Ascending aorta (tissue), 2 donors: ENCODE measurements at regions of chr4 and their contacts with region 1.

Region 1: DNA sequence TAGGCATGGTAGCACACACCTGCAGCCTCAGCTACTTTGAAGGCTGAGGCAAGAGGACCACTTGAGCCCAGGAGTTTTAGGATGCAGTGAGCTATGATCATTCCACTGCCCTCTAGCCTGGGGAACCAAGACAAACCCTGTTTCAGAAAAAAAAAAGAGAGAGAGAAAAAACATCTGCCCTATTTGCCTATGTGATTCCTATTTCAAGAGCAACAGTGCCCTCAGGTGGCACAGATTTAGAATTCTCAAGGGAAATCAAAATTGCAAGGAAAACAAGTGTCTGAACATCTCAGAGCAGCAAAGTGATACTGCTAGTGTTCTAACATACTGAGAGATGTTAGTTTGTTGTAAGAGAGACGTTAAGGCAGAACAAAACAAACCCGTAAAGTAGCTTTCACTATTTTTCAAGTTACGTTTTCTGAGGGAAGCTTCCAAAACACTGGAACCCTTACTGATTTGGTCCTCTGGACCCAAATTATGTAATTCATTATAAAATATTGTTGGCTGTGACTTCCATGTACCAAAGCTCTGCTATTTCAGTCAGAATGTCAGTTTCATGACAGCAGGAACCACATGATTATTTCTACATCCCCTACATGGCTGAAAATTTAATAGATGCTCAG is 7.9 kb downstream of the BDH2 start:
- DNase-seq: no peak
- H3K4me3 ChIP-seq: no peak overlapping the region
- H3K27ac ChIP-seq: no peak overlapping the region
- H3K4me1 ChIP-seq: peaks cover 0 to 2% of the 10 kb centered on the region in 2 donors
- H3K27me3 ChIP-seq: no peaks in the 10 kb centered on the region
- CTCF ChIP-seq: peak in 2 of 3 experiments; percentile 39 to 53

Region 2: DNA sequence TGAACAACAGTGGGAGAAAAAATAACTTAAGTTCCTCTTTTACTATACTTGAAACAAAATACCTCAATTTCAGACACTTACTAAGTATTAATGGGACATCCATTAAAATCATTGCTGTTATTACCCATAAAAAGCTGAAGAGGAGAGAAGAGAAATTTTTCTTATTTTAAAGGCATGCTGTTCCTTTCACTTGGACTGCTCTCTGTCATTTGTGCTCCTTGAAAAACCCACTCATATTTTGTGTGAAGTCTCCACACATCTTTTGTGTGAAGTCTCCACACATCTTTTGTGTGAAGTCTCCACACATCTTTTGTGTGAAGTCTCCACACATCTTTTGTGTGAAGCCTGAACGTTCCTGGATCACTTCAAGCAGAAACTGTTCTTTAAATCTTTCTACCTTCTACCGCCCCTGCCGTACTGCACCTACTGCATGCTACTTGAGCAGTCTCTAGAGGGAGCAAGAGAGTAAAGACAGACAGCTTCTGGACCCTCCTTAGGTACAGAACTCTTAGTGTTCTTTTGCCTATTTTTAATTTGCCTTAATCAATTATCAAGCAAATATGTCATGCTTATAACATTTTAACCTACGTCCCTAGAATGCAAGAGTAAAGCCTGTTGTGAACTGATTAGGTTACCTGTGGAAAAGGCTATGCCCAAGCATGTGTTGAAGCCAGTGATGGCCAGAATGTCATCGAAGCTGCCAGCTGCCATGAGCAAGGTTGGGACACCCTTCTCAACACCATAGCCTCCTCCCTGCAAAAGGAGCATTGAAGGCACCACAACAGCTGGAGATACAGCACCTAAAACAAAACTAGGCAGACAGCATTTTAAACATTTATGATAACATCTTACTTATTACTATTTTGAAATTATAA is 45.1 kb before region 1 on chr4:
- intact Hi-C with region 1: loop called (anchors 2 kb)
- DNase-seq: no peak
- H3K4me3 ChIP-seq: no peak overlapping the region
- H3K27ac ChIP-seq: no peak overlapping the region
- H3K4me1 ChIP-seq: no peaks in the 10 kb centered on the region
- H3K27me3 ChIP-seq: no peaks in the 10 kb centered on the region
- CTCF ChIP-seq: peak; percentile 26 to 64 (median 61)

Region 3: DNA sequence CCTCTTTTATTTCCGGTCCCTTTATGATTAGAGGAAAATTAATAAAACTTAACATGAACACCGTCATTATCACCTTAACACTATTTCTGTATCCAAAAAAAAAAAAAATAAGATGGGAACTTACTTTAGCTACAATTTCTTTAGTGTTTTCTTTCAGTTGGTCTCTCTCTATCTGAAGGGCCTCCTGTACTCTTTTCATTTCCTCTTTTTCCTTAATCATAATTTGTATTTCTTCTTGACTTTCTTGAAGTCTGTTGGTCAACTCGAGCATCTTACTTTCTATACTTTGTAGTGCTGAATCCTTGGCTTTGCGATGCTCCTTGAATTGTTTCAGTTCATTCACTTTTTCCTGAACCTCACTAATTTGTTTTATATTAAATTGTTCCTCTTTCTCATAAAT is 53.2 kb after region 1 on chr4:
- intact Hi-C with region 1: no loop called
- DNase-seq: no peak
- H3K4me3 ChIP-seq: no peak overlapping the region
- H3K27ac ChIP-seq: no peak overlapping the region
- H3K4me1 ChIP-seq: no peaks in the 10 kb centered on the region
- H3K27me3 ChIP-seq: no peaks in the 10 kb centered on the region
- CTCF ChIP-seq: no peak